Heart left ventricle (tissue), 16 donors: ENCODE measurements at regions of chr2 and their contacts with region 1.

Region 1: GRCh38 chr2:60484133-60484645 is 69.3 kb downstream of the BCL11A start:
- DNase-seq: peak in 1 of 5 donors; percentile 54
- ATAC-seq: peak in 3 of 4 donors; percentile 49 to 59 (median 53)
- H3K4me3 ChIP-seq: peak overlapping the region in 1 of 12 donors; percentile 18
- H3K27ac ChIP-seq: peak overlapping the region; percentile 35 to 88 (median 79)
- H3K4me1 ChIP-seq: peaks cover 0 to 57% (median 38%) of the 10 kb centered on the region in 12 donors
- H3K27me3 ChIP-seq: peaks cover 0 to 6% (median 0%) of the 10 kb centered on the region in 9 donors
- CTCF ChIP-seq: no peak
- POLR2A ChIP-seq: no peak

Region 2: DNA sequence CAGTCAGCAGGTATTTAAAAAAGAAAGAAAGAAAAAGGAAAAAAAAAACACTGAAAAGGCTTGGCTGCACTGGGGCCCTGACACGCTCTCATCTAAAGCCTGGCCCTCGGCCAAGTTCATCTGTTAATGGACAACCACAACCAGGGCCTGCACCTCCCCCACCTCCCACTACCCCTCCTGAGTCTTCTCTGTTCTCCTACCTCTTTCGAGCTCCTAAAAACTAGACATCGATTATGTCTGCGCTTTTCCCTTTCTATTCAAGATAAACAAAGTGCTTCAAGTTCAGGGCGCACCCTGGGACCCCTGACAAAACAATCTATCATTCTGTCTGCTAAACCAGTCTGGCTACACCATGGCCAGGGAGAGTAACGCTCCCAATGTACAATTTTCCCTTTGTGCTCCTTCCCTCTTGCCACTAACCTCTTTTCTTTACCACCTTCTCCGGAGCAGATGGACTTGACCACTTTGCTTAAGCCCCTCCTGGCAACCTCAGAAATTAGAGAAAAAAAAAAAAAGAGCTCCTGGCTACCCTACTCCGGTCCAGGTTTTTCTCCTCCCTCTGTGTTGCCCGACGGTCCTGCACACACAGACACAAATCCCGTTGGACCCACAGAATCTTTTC is 46.6 kb after region 1 on chr2:
- intact Hi-C with region 1: loop called in 1 of 10 experiments (anchors 5 kb)
- DNase-seq: peak; percentile 56 to 89 (median 78)
- ATAC-seq: peak; percentile 51 to 72 (median 62)
- H3K4me3 ChIP-seq: peak overlapping the region in 3 of 12 donors; percentile 3 to 21 (median 16)
- H3K27ac ChIP-seq: peak overlapping the region in 7 of 12 donors; percentile 2 to 61 (median 40)
- H3K4me1 ChIP-seq: peaks cover 0 to 72% (median 21%) of the 10 kb centered on the region in 12 donors
- H3K27me3 ChIP-seq: peaks cover 0 to 30% (median 3%) of the 10 kb centered on the region in 9 donors
- CTCF ChIP-seq: no peak
- POLR2A ChIP-seq: no peak

Region 3: GRCh38 chr2:60659026-60659425 is 174.8 kb after region 1 on chr2:
- intact Hi-C with region 1: no loop called
- DNase-seq: no peak
- ATAC-seq: no peak
- H3K4me3 ChIP-seq: no peak overlapping the region
- H3K27ac ChIP-seq: no peak overlapping the region
- H3K4me1 ChIP-seq: peaks cover 0 to 19% (median 0%) of the 10 kb centered on the region in 12 donors
- H3K27me3 ChIP-seq: peaks cover 0 to 2% (median 0%) of the 10 kb centered on the region in 9 donors
- CTCF ChIP-seq: no peak
- POLR2A ChIP-seq: no peak